HEK293 (cell line): ENCODE measurements at regions of chr11 and their contacts with region 1.

Region 1: DNA sequence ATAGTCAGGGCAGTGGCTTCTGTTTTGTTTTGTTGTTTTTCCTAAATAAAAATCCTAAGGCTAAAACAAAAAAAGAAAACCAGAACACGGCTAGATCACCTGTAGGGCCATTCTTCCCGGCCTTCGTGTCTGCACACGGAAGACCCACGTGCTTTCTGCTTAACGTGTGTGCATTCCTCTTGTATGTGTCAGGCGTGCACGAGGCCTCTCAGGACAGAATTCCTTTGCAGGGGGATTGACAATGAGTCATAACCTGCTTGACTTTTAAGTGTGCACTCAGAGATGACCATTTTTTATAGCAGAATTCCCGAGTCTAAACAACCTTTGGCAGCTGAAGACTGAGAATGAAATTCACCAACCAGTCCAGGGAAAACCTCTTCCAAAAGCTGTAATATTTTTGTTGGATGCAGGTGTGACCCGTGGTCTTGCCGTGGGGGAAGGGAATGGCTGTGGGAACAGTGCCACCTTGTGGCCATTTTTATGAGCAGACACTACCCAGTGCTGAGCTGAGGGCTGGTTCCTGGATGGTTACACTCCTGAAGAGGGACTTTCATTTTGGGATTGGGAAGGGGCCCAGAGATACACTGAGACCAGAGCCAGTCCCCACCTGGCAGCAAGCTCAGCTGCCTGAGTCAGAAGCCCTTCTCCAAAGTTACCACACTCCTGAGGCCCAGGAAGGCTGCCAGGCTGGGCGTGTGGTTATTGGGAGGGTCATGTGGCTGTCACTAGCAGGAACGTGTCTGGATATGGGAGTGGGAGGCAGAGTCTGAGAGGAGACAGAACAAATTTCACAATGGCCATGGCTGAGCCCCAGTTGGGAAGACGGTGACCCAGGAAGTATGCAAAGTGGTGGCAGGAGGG is 35.8 kb upstream of the DKK3 start:
- H3K4me3 ChIP-seq: no peak overlapping the region
- H3K27ac ChIP-seq: no peak overlapping the region
- H3K4me1 ChIP-seq: no peaks in the 10 kb centered on the region
- CTCF ChIP-seq: peak; percentile 49; the same call in 1 of the 2 replicates

Region 2: GRCh38 chr11:11787305-11788062 is 256.7 kb before region 1 on chr11:
- CTCF ChIA-PET with region 1: interaction called, 14 read pairs
- POLR2A ChIA-PET with region 1: no interaction called
- H3K4me3 ChIP-seq: no peak overlapping the region
- H3K27ac ChIP-seq: no peak overlapping the region
- H3K4me1 ChIP-seq: no peaks in the 10 kb centered on the region
- CTCF ChIP-seq: peak; percentile 55

Region 3: GRCh38 chr11:11931461-11932055 is 112.6 kb before region 1 on chr11:
- CTCF ChIA-PET with region 1: interaction called, 42 read pairs
- POLR2A ChIA-PET with region 1: no interaction called
- H3K4me3 ChIP-seq: no peak overlapping the region
- H3K27ac ChIP-seq: no peak overlapping the region
- H3K4me1 ChIP-seq: no peaks in the 10 kb centered on the region
- CTCF ChIP-seq: no peak

Region 4: GRCh38 chr11:11966826-11967668 is 77.1 kb before region 1 on chr11:
- CTCF ChIA-PET with region 1: interaction called, 32 read pairs
- POLR2A ChIA-PET with region 1: no interaction called
- H3K4me3 ChIP-seq: no peak overlapping the region
- H3K27ac ChIP-seq: no peak overlapping the region
- H3K4me1 ChIP-seq: no peaks in the 10 kb centered on the region
- CTCF ChIP-seq: peak; percentile 72

Region 5: DNA sequence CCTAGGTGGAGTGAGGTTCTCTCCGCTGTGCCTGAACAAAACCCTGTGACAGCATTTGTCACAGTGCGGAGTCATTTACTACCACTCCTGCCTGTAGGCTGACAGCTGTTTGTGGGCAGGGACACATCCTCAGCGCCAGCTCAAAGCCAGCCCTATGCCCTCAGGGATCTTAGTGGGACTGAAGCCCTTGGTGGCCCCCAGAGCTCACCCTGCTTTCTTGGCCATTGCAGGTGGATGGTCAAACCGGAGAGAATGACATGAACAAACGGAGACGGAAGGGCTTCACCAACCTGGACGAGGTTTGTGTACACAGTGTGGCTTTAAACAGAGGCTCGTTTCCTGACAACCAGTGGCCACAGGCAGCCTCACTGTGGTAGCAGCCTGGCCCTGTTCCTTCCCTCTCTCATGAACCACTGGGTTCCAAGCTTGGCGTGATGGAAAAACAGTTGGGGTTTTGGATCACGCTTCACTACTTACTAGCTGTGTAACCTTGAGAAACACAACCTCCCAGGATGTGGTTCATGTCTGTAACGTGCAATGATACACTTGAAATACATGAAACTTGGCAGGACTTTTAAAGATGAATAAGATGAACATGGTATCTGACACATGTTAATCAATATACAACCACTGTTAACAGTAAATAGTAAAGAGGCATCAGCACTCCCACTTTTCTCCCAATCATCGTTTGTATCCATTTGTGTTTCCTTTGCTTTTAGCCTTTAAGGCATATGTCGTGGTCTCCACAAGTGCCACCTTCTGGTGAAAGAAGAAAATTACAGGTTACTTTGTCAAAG is 192.0 kb after region 1 on chr11:
- CTCF ChIA-PET with region 1: interaction called, 79 read pairs
- POLR2A ChIA-PET with region 1: no interaction called
- H3K4me3 ChIP-seq: no peak overlapping the region
- H3K27ac ChIP-seq: no peak overlapping the region
- H3K4me1 ChIP-seq: no peaks in the 10 kb centered on the region
- CTCF ChIP-seq: no peak